PC-3 (cell line): ENCODE measurements at regions of chr22 and their contacts with region 1.

Region 1: DNA sequence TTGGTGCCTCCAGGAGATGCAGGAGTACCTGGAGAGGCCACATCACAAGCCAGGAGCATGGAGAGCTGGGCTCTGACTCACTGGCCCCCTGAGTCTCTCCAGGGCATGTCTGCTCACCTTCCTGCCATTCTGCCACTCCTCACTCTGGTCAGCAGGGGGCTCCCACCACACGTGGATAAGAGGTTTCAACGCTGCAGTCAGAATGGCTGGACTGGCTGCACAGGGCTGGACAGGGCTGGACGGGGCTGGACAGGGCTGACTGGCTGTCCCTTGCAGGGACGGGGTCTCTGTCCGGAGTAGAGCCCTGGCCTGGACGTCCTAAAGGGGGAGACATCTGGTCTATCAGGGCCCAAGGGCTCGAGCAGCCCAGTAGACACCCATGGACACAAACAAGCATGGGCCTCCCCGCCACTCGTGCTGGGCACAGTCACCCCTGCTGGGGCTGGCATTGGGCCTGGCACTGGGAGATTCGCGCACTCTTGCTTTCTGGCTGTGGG is 34.6 kb downstream of the CYTH4 start:
- DNase-seq: peak; percentile 87
- ATAC-seq: peak; percentile 93
- H3K4me3 ChIP-seq: no peak overlapping the region
- H3K27ac ChIP-seq: no peak overlapping the region
- H3K4me1 ChIP-seq: peaks cover 30% of the 10 kb centered on the region
- H3K27me3 ChIP-seq: no peaks in the 10 kb centered on the region
- CTCF ChIP-seq: peak; percentile 85

Region 2: DNA sequence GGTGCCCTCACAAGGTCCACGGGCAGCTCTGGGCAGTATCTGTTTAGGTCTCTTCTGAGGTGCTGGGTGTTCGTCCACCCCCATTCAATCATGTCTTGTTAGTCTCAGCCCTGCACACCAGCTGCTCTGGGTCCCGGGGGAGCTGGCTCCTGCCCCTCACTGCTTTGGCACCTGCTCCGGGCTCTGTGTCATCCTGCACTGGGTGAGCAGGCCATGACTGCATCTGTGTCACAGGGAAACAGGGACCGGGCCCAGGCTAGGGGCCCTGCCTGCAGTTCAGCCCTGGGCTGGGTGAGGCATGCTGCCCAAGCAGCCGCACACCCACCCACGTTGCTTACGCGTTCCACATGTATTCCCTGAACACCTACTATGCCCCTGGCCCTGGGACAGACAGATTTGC is 66.4 kb after region 1 on chr22:
- CTCF ChIA-PET with region 1: interaction called, 10 read pairs
- POLR2A ChIA-PET with region 1: no interaction called
- intact Hi-C with region 1: no loop called
- DNase-seq: no peak
- ATAC-seq: no peak
- H3K4me3 ChIP-seq: no peak overlapping the region
- H3K27ac ChIP-seq: no peak overlapping the region
- H3K4me1 ChIP-seq: peaks cover 5% of the 10 kb centered on the region; the same call in 1 of the 2 replicates
- H3K27me3 ChIP-seq: no peaks in the 10 kb centered on the region
- CTCF ChIP-seq: no peak

Region 3: GRCh38 chr22:37457093-37457893 is 140.4 kb after region 1 on chr22:
- CTCF ChIA-PET with region 1: interaction called, 5 read pairs
- POLR2A ChIA-PET with region 1: no interaction called
- intact Hi-C with region 1: loop called (anchors 1 kb)
- DNase-seq: peak; percentile 85
- ATAC-seq: peak; percentile 78
- H3K4me3 ChIP-seq: no peak overlapping the region
- H3K27ac ChIP-seq: 0 out of 2 replicates have a peak overlapping the region, but pooled peaks have one; percentile 93
- H3K4me1 ChIP-seq: peaks cover 25% of the 10 kb centered on the region
- H3K27me3 ChIP-seq: no peaks in the 10 kb centered on the region
- CTCF ChIP-seq: peak; percentile 95